K562 (cell line): ENCODE measurements at regions of chr6 and their contacts with region 1.

Region 1: DNA sequence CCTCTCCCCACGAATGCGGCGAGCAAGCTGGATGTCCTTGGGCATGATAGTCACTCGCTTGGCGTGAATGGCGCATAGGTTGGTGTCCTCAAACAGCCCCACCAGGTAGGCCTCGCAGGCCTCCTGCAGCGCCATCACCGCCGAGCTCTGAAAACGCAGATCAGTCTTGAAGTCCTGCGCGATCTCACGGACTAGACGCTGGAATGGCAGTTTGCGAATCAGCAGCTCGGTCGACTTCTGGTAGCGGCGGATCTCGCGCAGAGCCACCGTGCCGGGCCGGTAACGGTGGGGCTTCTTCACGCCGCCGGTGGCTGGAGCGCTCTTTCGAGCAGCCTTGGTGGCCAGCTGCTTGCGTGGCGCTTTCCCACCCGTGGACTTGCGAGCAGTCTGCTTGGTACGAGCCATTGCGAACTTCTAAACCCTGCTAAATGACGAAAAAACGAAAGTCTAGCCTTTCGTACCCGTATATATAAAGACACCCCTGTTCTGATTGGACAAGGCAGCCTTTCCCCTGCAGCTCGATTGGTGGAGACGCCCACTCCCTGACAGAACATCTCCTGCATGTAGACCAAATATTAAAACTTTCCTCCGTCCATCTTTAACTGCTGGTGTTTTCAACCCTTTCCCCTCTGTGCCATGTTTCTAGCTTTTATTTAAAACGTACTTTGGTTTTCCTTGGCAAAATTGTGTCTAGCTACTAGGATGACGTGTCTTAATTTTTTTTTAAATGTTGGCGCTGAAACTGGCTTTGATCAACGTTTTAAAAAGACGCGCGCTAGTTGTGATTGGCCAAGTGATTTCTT is 109.8 kb downstream of the HFE start:
- DNase-seq: peak; percentile 89 to 93 (median 90)
- ATAC-seq: peak; percentile 53
- H3K4me3 ChIP-seq: peak overlapping the region; percentile 86
- H3K27ac ChIP-seq: peak overlapping the region; percentile 99
- H3K4me1 ChIP-seq: peaks cover 7 to 13% of the 10 kb centered on the region in 2 experiments
- H3K27me3 ChIP-seq: no peaks in the 10 kb centered on the region
- CTCF ChIP-seq: 0 out of 6 replicates have a peak, but pooled peaks of 1 of the 3 experiments have one; percentile 19
- EP300 ChIP-seq: peak; percentile 43
- POLR2A ChIP-seq: peak; percentile 97
- RAD21 ChIP-seq: 0 out of 4 replicates have a peak, but pooled peaks of 1 of the 2 experiments have one; percentile 8

Region 2: GRCh38 chr6:25874822-25875562 is 322.1 kb before region 1 on chr6:
- CTCF ChIA-PET with region 1: no interaction called
- POLR2A ChIA-PET with region 1: no interaction called
- in situ Hi-C with region 1: no loop called
- intact Hi-C with region 1: no loop called
- DNase-seq: no peak
- ATAC-seq: peak; percentile 55; the same call in 2 of the 3 replicates
- H3K4me3 ChIP-seq: no peak overlapping the region
- H3K27ac ChIP-seq: peak overlapping the region; percentile 1; the same call in 1 of the 3 replicates
- H3K4me1 ChIP-seq: no peaks in the 10 kb centered on the region; a peak in 2 of 5 replicates
- H3K27me3 ChIP-seq: no peaks in the 10 kb centered on the region
- CTCF ChIP-seq: no peak
- EP300 ChIP-seq: no peak
- POLR2A ChIP-seq: no peak
- RAD21 ChIP-seq: no peak

Region 3: GRCh38 chr6:26156076-26156849 is 40.8 kb before region 1 on chr6:
- CTCF ChIA-PET with region 1: no interaction called
- POLR2A ChIA-PET with region 1: interaction called, 245 read pairs
- in situ Hi-C with region 1: no loop called
- intact Hi-C with region 1: loop called (anchors 1 kb)
- DNase-seq: peak; percentile 96 to 97 (median 97)
- ATAC-seq: peak; percentile 78
- H3K4me3 ChIP-seq: peak overlapping the region; percentile 65
- H3K27ac ChIP-seq: peak overlapping the region; percentile 85
- H3K4me1 ChIP-seq: peaks cover 12 to 18% of the 10 kb centered on the region in 2 experiments; a peak in 4 of 5 replicates
- H3K27me3 ChIP-seq: no peaks in the 10 kb centered on the region
- CTCF ChIP-seq: no peak
- EP300 ChIP-seq: peak; percentile 29
- POLR2A ChIP-seq: peak; percentile 100
- RAD21 ChIP-seq: 0 out of 4 replicates have a peak, but pooled peaks of 1 of the 2 experiments have one; percentile 21

Region 4: DNA sequence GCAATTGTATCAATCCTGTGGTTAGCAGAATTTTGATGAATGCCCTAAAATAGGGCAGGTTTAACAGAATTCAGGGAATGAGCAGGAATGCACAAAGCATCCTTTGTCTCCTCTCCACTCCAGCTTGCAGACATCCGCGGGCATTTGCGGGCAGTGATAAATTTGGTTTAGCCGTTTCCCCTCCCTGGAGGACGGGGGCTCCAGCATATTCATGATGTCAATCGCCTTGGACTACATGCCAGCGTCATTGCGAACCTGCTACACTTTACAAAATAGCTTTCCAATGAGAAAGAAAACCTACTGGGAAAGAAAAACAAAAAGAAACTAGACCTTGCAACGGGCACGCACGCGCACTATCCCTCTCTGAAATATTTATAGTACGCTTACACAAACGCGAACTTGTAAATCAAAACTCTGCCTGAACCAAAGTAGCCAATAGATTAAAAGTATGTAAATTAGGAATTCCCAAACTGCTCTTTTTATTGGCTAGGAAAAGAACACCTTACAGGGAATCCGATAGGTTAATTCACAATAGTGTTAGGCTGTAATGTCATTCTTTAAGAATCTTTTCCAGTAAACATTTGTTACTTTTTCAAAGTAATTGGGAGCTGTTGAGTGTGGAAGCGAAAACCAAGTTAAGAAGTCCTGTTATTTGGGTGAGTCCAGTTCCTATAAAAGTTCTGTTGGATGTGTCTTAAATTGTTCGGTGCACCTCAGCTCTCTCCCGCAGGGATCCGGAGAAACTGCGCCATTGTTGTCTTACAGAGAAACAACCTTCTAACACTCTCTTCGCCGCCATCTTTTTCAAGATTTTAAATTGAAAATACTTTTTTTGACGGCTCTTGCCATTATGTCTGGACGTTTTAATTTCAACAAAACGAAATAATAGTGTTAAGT is 26.9 kb after region 1 on chr6:
- CTCF ChIA-PET with region 1: no interaction called
- POLR2A ChIA-PET with region 1: interaction called, 1,095 read pairs
- in situ Hi-C with region 1: no loop called
- intact Hi-C with region 1: no loop called
- DNase-seq: no peak
- ATAC-seq: no peak
- H3K4me3 ChIP-seq: no peak overlapping the region
- H3K27ac ChIP-seq: no peak overlapping the region
- H3K4me1 ChIP-seq: peaks cover 1 to 19% of the 10 kb centered on the region in 2 experiments
- H3K27me3 ChIP-seq: no peaks in the 10 kb centered on the region
- CTCF ChIP-seq: no peak
- EP300 ChIP-seq: no peak
- POLR2A ChIP-seq: no peak
- RAD21 ChIP-seq: no peak

Region 5: GRCh38 chr6:26280407-26280806 is 83.4 kb after region 1 on chr6:
- CTCF ChIA-PET with region 1: no interaction called
- POLR2A ChIA-PET with region 1: interaction called, 73 read pairs
- in situ Hi-C with region 1: no loop called
- intact Hi-C with region 1: no loop called
- DNase-seq: peak in 1 of 4 experiments; percentile 48
- ATAC-seq: no peak
- H3K4me3 ChIP-seq: no peak overlapping the region
- H3K27ac ChIP-seq: no peak overlapping the region
- H3K4me1 ChIP-seq: peaks cover 11 to 13% of the 10 kb centered on the region in 2 experiments; a peak in 4 of 5 replicates
- H3K27me3 ChIP-seq: no peaks in the 10 kb centered on the region
- CTCF ChIP-seq: no peak
- EP300 ChIP-seq: no peak
- POLR2A ChIP-seq: peak; percentile 51; the same call in 1 of the 2 replicates
- RAD21 ChIP-seq: peak in 1 of 2 experiments; percentile 10; a peak in 1 of 4 replicates

Region 6: GRCh38 chr6:26312501-26313390 is 115.7 kb after region 1 on chr6:
- CTCF ChIA-PET with region 1: no interaction called
- POLR2A ChIA-PET with region 1: interaction called, 63 read pairs
- in situ Hi-C with region 1: no loop called
- intact Hi-C with region 1: no loop called
- DNase-seq: peak; percentile 69 to 95 (median 72)
- ATAC-seq: peak; percentile 76
- H3K4me3 ChIP-seq: peak overlapping the region; percentile 53
- H3K27ac ChIP-seq: peak overlapping the region; percentile 66
- H3K4me1 ChIP-seq: peaks cover 4 to 34% of the 10 kb centered on the region in 2 experiments
- H3K27me3 ChIP-seq: no peaks in the 10 kb centered on the region
- CTCF ChIP-seq: no peak; a peak in 1 of 6 replicates
- EP300 ChIP-seq: peak; percentile 65
- POLR2A ChIP-seq: no peak
- RAD21 ChIP-seq: peak in 1 of 2 experiments; percentile 45; a peak in 2 of 4 replicates

Region 7: GRCh38 chr6:26514984-26515383 is 317.9 kb after region 1 on chr6:
- CTCF ChIA-PET with region 1: no interaction called
- POLR2A ChIA-PET with region 1: no interaction called
- in situ Hi-C with region 1: no loop called
- intact Hi-C with region 1: no loop called
- DNase-seq: no peak
- ATAC-seq: peak; percentile 10; the same call in 1 of the 3 replicates
- H3K4me3 ChIP-seq: no peak overlapping the region
- H3K27ac ChIP-seq: no peak overlapping the region
- H3K4me1 ChIP-seq: peaks cover 0 to 13% of the 10 kb centered on the region in 2 experiments; a peak in 2 of 5 replicates
- H3K27me3 ChIP-seq: no peaks in the 10 kb centered on the region
- CTCF ChIP-seq: no peak
- EP300 ChIP-seq: no peak
- POLR2A ChIP-seq: no peak
- RAD21 ChIP-seq: no peak

Region 8: DNA sequence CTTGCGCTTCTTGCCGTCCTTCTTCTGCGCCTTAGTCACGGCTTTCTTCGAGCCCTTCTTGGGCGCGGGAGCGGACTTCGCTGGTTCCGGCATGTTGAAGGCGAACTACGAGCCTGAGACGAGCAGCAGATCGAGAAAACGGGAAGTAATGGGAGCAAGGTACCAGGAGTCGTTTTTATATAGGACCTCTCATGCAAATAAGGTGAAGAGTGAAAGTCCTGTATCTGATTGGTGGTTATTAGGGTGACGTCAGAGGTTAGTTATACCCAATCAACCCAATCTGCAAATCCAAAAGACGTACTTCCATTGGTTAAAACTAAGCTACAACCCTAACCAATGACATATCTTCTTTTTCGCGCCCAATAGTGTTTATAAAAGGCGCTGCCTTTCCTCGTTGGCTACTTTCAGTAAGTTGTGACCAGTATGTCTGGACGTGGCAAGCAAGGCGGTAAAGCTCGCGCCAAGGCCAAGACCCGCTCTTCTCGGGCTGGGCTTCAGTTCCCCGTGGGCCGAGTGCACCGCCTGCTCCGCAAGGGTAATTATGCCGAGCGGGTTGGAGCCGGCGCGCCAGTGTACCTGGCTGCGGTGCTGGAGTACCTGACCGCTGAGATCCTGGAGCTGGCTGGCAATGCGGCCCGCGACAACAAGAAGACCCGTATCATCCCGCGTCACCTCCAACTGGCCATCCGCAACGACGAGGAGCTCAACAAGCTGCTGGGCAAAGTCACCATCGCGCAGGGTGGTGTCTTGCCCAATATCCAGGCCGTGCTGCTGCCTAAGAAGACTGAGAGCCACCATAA is 949.9 kb after region 1 on chr6:
- CTCF ChIA-PET with region 1: no interaction called
- POLR2A ChIA-PET with region 1: interaction called, 50 read pairs
- in situ Hi-C with region 1: no loop called
- intact Hi-C with region 1: loop called (anchors 2 kb)
- DNase-seq: peak; percentile 93 to 99 (median 98)
- ATAC-seq: peak; percentile 68
- H3K4me3 ChIP-seq: peak overlapping the region; percentile 71
- H3K27ac ChIP-seq: peak overlapping the region; percentile 94
- H3K4me1 ChIP-seq: peaks cover 4 to 13% of the 10 kb centered on the region in 2 experiments
- H3K27me3 ChIP-seq: no peaks in the 10 kb centered on the region
- CTCF ChIP-seq: no peak
- EP300 ChIP-seq: no peak; the same call in 1 of the 2 replicates
- POLR2A ChIP-seq: peak; percentile 100
- RAD21 ChIP-seq: no peak; a peak in 1 of 4 replicates